Colonic mucosa (tissue), 4 donors: ENCODE measurements at regions of chr9 and their contacts with region 1.

Region 1: DNA sequence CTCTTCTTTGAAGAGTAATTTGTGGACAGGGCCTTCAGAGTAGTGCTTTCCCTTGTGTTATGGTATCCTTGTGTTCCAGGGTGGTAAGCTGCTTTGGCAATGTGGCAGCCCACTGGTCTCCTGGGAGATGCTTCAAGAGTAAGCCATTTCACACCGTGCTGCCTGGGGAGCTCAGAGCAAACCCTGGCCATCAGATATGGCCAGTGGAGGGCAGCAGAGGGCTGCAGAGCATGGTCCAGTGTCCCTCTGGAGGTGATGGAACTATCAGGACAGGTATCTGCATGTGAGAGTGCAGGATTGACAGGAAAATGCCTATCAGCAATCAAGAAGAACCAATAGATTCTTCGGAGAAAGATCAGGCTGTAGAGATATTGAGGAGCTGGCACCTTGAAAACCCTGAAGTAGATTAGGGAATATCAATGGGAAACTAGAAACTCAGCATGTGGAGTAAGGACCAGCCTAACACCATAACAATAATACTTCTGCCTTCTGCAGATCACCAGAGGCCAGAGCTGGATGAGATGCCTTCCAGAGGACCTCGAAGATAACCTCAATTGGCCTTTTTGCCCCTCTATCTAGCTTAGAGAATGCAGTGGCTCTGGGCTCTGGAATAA is 90.8 kb downstream of the PLPPR1 start:
- DNase-seq: peak; percentile 59
- H3K4me3 ChIP-seq: no peak overlapping the region
- H3K27ac ChIP-seq: no peak overlapping the region
- H3K4me1 ChIP-seq: no peaks in the 10 kb centered on the region
- H3K27me3 ChIP-seq: no peaks in the 10 kb centered on the region
- CTCF ChIP-seq: peak; percentile 68

Region 2: DNA sequence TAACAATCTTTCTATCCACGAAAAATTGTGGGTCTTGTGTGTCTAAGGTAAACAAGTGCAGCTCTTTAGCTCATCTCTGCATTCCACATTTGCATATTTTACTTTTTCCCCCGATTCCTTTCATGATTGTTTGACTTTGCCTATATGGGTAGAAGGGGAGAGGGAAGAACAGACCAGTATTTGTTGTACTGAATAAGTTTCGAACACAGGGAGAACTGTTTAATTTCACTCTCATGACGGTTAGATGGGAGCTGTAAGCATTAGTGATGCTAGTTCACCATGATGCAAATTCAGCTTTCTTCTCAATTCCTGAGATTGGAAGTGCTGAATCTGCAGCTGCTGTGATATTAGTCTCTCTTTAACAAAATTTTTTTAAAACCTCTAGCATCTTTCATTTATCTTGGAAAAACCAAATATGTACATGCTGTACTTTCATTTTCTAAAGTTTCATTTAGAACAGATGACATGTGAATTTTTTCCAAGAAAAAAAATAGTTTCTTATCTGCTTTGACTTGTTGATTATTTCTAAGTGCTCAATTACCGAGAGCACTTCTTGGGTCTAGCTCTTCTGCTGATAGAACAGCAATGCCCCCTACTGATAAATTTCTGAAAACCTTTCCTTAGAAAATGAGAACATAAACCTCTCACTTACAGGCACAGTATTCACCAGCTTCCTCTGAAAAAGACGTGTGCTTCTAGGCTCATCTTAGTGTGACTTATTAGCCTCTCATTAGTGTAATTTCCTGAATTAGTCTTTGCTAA is 116.0 kb after region 1 on chr9:
- intact Hi-C with region 1: loop called (anchors 2 kb)
- DNase-seq: no peak
- H3K4me3 ChIP-seq: no peak overlapping the region
- H3K27ac ChIP-seq: no peak overlapping the region
- H3K4me1 ChIP-seq: no peaks in the 10 kb centered on the region
- H3K27me3 ChIP-seq: no peaks in the 10 kb centered on the region
- CTCF ChIP-seq: no peak

Region 3: DNA sequence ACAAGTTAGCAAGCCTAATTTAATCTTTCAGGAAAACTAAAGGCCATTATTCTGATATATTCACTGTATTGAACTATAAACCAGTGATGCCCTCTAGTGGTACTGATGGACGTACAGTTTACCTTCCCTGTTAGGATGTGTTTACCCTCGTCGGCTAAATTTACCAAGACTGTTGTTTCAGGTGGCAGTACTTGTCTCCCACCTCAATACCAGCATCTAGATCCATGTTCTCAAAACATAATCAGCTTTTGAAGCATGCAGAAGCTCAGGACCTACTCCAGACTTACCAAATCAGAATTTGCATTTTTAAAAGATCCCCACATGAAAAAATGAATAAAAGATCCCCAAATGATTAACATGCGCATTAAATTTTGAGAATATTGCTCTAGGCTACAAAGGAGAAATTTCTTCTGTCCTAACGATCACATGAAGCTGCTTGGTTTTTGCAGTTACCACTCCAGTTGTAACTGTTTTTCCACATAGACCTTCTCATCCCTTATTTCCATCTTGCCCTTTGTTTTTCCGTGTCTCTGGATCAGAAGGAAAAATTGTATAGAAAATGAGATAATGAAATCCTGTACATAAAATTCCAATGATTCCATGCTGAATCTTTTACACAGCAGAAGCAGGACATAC is 268.7 kb after region 1 on chr9:
- intact Hi-C with region 1: loop called (anchors 5 kb)
- DNase-seq: peak; percentile 26
- H3K4me3 ChIP-seq: no peak overlapping the region
- H3K27ac ChIP-seq: no peak overlapping the region
- H3K4me1 ChIP-seq: no peaks in the 10 kb centered on the region
- H3K27me3 ChIP-seq: no peaks in the 10 kb centered on the region
- CTCF ChIP-seq: peak; percentile 38